ENCODE measurements at regions of chr1 and their contacts with region 1.

Region 1: DNA sequence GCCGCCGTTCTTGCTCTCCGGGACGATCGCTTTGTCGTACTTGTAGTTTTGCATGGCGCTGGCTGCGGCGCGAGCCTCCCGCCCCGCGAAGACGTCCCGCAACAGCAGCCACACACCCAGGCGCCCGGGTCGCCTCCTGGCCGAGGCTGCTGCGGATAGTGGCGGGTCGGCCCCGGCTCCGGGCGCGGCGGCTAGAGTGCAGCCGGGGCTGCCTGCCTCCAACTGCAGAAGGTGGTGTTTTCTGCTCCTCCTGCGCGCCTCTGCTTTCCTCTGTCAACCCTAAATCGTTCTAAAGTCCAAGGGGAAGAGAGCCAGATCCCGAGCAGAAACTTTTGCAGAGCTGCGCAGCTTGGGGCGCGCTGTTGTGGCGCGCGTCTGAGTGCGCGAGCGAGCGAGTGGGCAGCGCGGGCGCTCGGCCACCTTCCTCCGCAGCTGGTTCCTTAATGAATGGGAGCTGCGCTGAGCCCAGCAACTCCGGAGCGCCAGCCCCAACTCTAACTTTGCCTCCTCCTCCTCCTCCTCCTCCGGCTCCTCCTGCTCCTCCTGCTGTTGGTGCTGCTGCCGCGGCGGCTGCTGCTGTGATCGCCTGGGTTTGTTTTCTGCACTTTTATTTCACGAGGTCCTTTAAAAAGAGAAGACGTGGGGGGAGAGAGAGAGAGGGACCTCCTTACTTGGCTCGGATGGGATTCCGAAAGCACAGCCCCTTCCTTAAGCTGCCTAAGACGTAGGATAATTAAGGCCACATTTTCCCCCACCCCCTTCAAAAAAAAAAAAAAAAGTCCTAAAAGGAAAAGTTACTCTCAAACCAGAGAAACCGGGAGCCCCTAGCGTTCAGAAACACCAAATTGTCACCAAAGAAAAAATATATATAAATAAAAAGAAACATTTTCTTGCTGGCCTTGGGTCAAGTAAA is at the start of gene PLPP3:
- DNase-seq: peak; percentile 94
- H3K4me3 ChIP-seq: peak within 1 kb of the TSS; percentile 42 to 99 (median 66)
- H3K27ac ChIP-seq: peak within 1 kb of the TSS; percentile 75
- H3K4me1 ChIP-seq: peaks cover 36% of the 10 kb centered on the region
- H3K27me3 ChIP-seq: no peaks in the 10 kb centered on the region
- CTCF ChIP-seq: peak; percentile 34 to 37
- POLR2A ChIP-seq: peak; percentile 93
- total RNA-seq, gene PLPP3: 7.2 and 14.1 TPM in 2 replicates

Region 2: GRCh38 chr1:55337801-55338447 is 1241.3 kb before region 1 on chr1:
- CTCF ChIA-PET with region 1: interaction called, 52 read pairs
- POLR2A ChIA-PET with region 1: no interaction called
- dilution Hi-C with region 1: no loop called
- intact Hi-C with region 1: no loop called
- DNase-seq: peak; percentile 79
- H3K4me3 ChIP-seq: no peak overlapping the region
- H3K27ac ChIP-seq: no peak overlapping the region
- H3K4me1 ChIP-seq: peaks cover 16% of the 10 kb centered on the region
- H3K27me3 ChIP-seq: no peaks in the 10 kb centered on the region
- CTCF ChIP-seq: peak; percentile 52 to 63
- POLR2A ChIP-seq: no peak

Region 3: DNA sequence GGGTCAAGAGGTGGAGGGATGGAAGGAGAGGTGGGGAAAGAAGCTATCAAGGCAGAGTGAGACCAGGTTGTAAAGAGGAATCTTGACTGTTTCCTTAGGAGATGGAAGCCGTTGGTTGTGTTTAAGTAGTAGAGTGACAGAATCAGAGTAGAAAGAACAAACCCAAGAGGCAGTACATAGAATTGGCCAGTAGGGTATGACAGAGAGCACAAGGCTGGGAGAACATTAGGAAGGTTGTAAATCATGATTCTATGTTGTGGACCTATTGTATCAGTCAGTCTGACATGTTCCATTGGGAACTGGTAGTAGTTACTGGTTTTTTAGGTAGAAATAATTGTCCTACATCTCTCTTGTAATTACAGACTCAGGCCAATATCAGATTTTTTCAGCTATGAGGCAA is 877.2 kb before region 1 on chr1:
- CTCF ChIA-PET with region 1: interaction called, 5 read pairs
- POLR2A ChIA-PET with region 1: no interaction called
- dilution Hi-C with region 1: no loop called
- intact Hi-C with region 1: loop called (anchors 1 kb)
- DNase-seq: peak; percentile 63
- H3K4me3 ChIP-seq: no peak overlapping the region
- H3K27ac ChIP-seq: no peak overlapping the region
- H3K4me1 ChIP-seq: no peaks in the 10 kb centered on the region
- H3K27me3 ChIP-seq: no peaks in the 10 kb centered on the region
- CTCF ChIP-seq: peak; percentile 55 to 71
- POLR2A ChIP-seq: no peak

Region 4: GRCh38 chr1:56148326-56149193 is 430.7 kb before region 1 on chr1:
- CTCF ChIA-PET with region 1: no interaction called
- POLR2A ChIA-PET with region 1: no interaction called
- dilution Hi-C with region 1: no loop called
- intact Hi-C with region 1: no loop called
- DNase-seq: peak; percentile 75
- H3K4me3 ChIP-seq: no peak overlapping the region
- H3K27ac ChIP-seq: no peak overlapping the region
- H3K4me1 ChIP-seq: peaks cover 20% of the 10 kb centered on the region
- H3K27me3 ChIP-seq: no peaks in the 10 kb centered on the region
- CTCF ChIP-seq: peak in 1 of 2 donors; percentile 27
- POLR2A ChIP-seq: no peak

Region 5: DNA sequence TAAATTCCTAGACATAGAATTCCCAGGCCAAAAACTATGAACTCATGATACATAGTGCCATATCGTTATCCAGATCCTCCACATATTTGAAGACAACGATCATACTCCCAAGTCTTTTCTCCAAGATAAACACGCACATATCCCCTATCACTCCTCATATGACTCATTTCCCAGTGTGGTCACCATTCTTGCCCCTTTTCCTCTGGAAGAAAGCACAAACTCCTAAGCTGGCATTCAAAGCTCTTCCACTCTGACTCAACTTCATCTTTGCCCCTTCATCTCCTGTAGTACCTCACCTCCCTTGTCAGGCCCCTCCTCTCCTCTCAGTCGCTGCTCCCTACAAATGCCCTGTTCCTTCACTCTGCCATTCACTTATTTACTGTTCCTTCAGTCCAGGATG is 277.4 kb before region 1 on chr1:
- CTCF ChIA-PET with region 1: interaction called, 6 read pairs
- POLR2A ChIA-PET with region 1: no interaction called
- dilution Hi-C with region 1: no loop called
- intact Hi-C with region 1: loop called (anchors 1 kb)
- DNase-seq: peak; percentile 93
- H3K4me3 ChIP-seq: no peak overlapping the region
- H3K27ac ChIP-seq: no peak overlapping the region
- H3K4me1 ChIP-seq: peaks cover 17% of the 10 kb centered on the region
- H3K27me3 ChIP-seq: no peaks in the 10 kb centered on the region
- CTCF ChIP-seq: no peak
- POLR2A ChIP-seq: peak; percentile 41

Region 6: GRCh38 chr1:56456436-56457101 is 122.7 kb before region 1 on chr1:
- CTCF ChIA-PET with region 1: interaction called, 10 read pairs
- POLR2A ChIA-PET with region 1: interaction called, 3 read pairs
- dilution Hi-C with region 1: no loop called
- intact Hi-C with region 1: loop called (anchors 1 kb)
- DNase-seq: peak; percentile 71
- H3K4me3 ChIP-seq: no peak overlapping the region
- H3K27ac ChIP-seq: peak overlapping the region; percentile 67
- H3K4me1 ChIP-seq: peaks cover 21% of the 10 kb centered on the region
- H3K27me3 ChIP-seq: no peaks in the 10 kb centered on the region
- CTCF ChIP-seq: no peak
- POLR2A ChIP-seq: no peak

Region 7: DNA sequence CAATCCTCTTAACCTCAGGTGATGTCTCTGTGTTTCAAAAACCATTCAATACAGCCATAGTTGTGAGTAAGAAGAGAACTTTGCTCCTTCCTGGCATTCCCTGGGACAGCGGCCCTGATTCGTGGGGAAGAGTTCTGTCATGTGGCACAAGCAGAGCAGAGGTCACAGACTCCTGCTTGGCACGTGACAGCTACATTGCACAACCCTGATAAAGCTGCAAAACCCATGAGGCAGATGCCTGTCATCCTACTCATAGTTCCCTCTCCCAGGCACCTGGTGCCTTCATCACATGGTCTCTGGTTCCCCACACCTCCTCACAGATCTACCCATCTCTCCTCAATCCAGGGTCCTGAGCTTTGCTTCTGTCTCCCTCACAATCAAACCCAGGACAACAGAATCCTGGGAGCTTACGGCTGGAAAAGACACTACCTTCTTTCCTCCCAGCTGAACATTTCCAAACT is 70.7 kb before region 1 on chr1:
- CTCF ChIA-PET with region 1: interaction called, 4 read pairs
- POLR2A ChIA-PET with region 1: no interaction called
- dilution Hi-C with region 1: no loop called
- intact Hi-C with region 1: loop called (anchors 5 kb)
- DNase-seq: no peak
- H3K4me3 ChIP-seq: no peak overlapping the region
- H3K27ac ChIP-seq: no peak overlapping the region
- H3K4me1 ChIP-seq: peaks cover 25% of the 10 kb centered on the region
- H3K27me3 ChIP-seq: no peaks in the 10 kb centered on the region
- CTCF ChIP-seq: no peak
- POLR2A ChIP-seq: no peak

Measured in endothelial cell of umbilical vein (primary cell).